Endothelial cell of umbilical vein (primary cell): ENCODE measurements at regions of chr14 and their contacts with region 1.

Region 1: GRCh38 chr14:39015360-39015961 is 87.6 kb downstream of the SEC23A start:
- DNase-seq: peak; percentile 76
- H3K4me3 ChIP-seq: no peak overlapping the region
- H3K27ac ChIP-seq: no peak overlapping the region
- H3K4me1 ChIP-seq: no peaks in the 10 kb centered on the region
- H3K27me3 ChIP-seq: no peaks in the 10 kb centered on the region
- CTCF ChIP-seq: peak; percentile 64 to 72
- POLR2A ChIP-seq: no peak

Region 2: GRCh38 chr14:38208618-38209562 is 806.6 kb before region 1 on chr14:
- CTCF ChIA-PET with region 1: interaction called, 3 read pairs
- POLR2A ChIA-PET with region 1: no interaction called
- dilution Hi-C with region 1: no loop called
- intact Hi-C with region 1: loop called (anchors 5 kb)
- DNase-seq: peak; percentile 47
- H3K4me3 ChIP-seq: peak overlapping the region; percentile 34 to 58 (median 44)
- H3K27ac ChIP-seq: no peak overlapping the region
- H3K4me1 ChIP-seq: peaks cover 36% of the 10 kb centered on the region
- H3K27me3 ChIP-seq: no peaks in the 10 kb centered on the region
- CTCF ChIP-seq: peak in 1 of 2 donors; percentile 48
- POLR2A ChIP-seq: no peak

Region 3: DNA sequence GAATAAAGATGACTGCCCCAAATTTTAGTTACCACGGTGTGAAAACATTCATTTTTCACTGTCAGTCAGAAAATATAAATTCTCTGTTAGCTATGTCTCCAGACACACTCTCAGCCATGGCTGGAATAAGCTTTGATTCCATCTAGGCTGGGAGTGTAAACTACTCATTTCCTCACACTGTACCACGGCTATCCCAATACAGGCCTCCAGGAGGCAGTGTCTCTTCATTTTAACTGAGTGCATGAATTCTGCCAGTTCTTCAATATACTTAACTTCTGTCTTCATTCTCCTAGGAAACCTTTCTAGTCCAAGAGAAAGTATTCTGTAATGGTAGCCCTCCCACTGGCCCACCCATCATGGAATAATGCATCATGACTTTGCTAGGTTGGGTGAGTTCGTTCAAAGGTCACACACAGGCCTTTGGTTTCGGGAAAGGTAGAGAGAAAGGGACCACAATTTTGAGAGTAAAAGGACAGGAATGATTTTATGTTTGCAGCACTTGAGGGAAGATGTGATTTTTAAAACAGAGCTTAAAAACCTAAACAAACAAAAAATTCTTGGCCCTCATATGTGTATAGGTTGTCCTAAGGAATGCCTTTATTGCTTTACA is 293.5 kb before region 1 on chr14:
- CTCF ChIA-PET with region 1: interaction called, 167 read pairs
- POLR2A ChIA-PET with region 1: no interaction called
- dilution Hi-C with region 1: no loop called
- intact Hi-C with region 1: loop called (anchors 1 kb)
- DNase-seq: peak; percentile 89
- H3K4me3 ChIP-seq: no peak overlapping the region
- H3K27ac ChIP-seq: no peak overlapping the region
- H3K4me1 ChIP-seq: no peaks in the 10 kb centered on the region
- H3K27me3 ChIP-seq: no peaks in the 10 kb centered on the region
- CTCF ChIP-seq: peak; percentile 72 to 78
- POLR2A ChIP-seq: no peak

Region 4: GRCh38 chr14:38873941-38874612 is 141.4 kb before region 1 on chr14:
- CTCF ChIA-PET with region 1: interaction called, 95 read pairs
- POLR2A ChIA-PET with region 1: no interaction called
- dilution Hi-C with region 1: no loop called
- intact Hi-C with region 1: no loop called
- DNase-seq: peak; percentile 30
- H3K4me3 ChIP-seq: no peak overlapping the region
- H3K27ac ChIP-seq: no peak overlapping the region
- H3K4me1 ChIP-seq: no peaks in the 10 kb centered on the region
- H3K27me3 ChIP-seq: no peaks in the 10 kb centered on the region
- CTCF ChIP-seq: no peak
- POLR2A ChIP-seq: no peak

Region 5: DNA sequence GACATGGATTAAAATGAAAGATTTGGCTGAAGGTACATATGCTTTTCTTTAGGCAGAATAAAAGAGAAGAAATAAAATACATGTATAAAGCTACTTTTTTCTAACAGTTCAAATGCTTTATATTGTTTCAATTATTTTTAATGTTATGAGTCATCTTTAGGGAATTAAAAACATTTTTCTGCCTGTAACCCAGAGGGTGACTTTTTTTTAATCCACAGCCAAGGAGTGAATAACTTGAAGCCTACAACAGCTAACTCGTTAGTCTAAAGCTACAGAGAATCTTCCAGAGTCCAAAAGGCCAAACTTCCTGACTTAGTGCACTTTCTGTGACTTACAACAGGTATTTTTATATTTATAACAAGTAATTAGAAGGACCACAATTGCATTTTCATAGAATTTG is 64.0 kb before region 1 on chr14:
- CTCF ChIA-PET with region 1: interaction called, 18 read pairs
- POLR2A ChIA-PET with region 1: no interaction called
- dilution Hi-C with region 1: no loop called
- intact Hi-C with region 1: no loop called
- DNase-seq: peak; percentile 65
- H3K4me3 ChIP-seq: no peak overlapping the region
- H3K27ac ChIP-seq: no peak overlapping the region
- H3K4me1 ChIP-seq: peaks cover 21% of the 10 kb centered on the region
- H3K27me3 ChIP-seq: no peaks in the 10 kb centered on the region
- CTCF ChIP-seq: no peak
- POLR2A ChIP-seq: no peak

Region 6: GRCh38 chr14:39034481-39035296 is 19.2 kb after region 1 on chr14:
- CTCF ChIA-PET with region 1: interaction called, 26 read pairs
- POLR2A ChIA-PET with region 1: no interaction called
- dilution Hi-C with region 1: no loop called
- intact Hi-C with region 1: no loop called
- DNase-seq: peak; percentile 53
- H3K4me3 ChIP-seq: no peak overlapping the region
- H3K27ac ChIP-seq: no peak overlapping the region
- H3K4me1 ChIP-seq: no peaks in the 10 kb centered on the region
- H3K27me3 ChIP-seq: no peaks in the 10 kb centered on the region
- CTCF ChIP-seq: peak; percentile 36 to 41
- POLR2A ChIP-seq: no peak

Region 7: DNA sequence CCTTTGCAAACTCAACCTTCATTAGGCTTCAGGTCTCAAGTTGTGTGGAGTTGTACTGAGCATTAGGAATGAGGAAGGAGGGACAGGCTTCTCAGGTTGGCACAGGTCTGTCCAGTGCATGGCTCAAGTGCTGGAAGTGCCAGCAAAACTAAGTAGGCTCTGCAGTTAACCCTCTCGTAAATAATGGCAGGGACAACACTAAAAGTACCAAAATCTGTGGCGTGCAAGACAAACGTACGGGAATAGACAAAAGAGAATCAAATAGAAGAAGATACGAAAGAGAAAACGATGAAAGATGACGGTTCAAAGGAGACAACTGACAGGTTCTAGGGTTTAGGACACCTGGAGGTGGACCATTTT is 154.1 kb after region 1 on chr14:
- CTCF ChIA-PET with region 1: no interaction called
- POLR2A ChIA-PET with region 1: no interaction called
- dilution Hi-C with region 1: no loop called
- intact Hi-C with region 1: no loop called
- DNase-seq: peak; percentile 48
- H3K4me3 ChIP-seq: peak overlapping the region; percentile 76 to 91 (median 89)
- H3K27ac ChIP-seq: peak overlapping the region; percentile 51
- H3K4me1 ChIP-seq: peaks cover 21% of the 10 kb centered on the region
- H3K27me3 ChIP-seq: no peaks in the 10 kb centered on the region
- CTCF ChIP-seq: no peak
- POLR2A ChIP-seq: no peak